Caco-2 (cell line): ENCODE measurements at regions of chr12 and their contacts with region 1.

Region 1: DNA sequence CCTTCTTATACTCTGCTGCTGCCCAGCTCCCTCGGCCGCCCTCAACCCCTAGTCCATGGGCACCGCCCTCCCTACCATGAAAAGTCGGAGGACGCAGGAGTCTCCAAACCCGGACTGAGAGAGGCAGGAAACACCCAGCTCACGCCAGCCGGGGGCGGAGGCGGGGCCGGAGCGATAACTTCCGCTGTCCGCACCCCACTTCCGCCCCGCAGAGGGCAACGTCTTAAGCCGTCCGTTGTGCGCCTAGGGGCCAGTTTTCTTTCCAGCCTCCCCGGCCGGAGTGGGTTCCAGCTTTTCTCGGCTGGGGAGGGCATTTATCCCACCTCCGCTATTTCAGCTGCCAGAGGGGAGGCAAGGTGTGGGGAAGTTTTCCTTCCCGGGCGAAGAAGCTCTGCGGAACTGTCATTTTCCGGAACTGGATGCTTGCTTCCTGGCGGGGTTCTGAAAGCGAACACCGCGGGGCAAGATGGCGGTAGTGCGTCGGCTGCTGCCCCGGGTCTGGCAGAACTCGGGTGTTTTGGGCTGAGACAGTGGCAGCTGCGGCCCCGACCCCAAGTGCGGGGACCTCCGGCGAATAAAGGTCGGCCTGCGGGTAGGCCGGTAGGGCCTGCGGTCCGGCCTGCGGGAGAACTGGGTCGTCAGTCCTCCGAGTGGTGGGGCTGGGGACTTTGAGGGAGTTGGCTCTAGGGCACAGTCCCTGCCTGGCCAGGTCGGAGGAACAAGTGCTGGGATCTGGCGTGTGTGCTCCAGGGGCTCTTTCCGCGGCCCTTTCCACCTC is at the starts of genes KCTD10 and UBE3B:
- DNase-seq: peak; percentile 89 to 90
- H3K4me3 ChIP-seq: peak within 1 kb of the TSS; percentile 95
- H3K4me3 Mint-ChIP-seq: peak within 1 kb of the TSS; percentile 99
- H3K27ac Mint-ChIP-seq: peak within 1 kb of the TSS; percentile 93
- H3K4me1 ChIP-seq: peaks cover 15% of the 10 kb centered on the region
- H3K4me1 Mint-ChIP-seq: no peaks in the 10 kb centered on the region
- H3K27me3 ChIP-seq: no peaks in the 10 kb centered on the region
- H3K27me3 Mint-ChIP-seq: no peaks in the 10 kb centered on the region
- CTCF ChIP-seq: no peak
- total RNA-seq, gene KCTD10: 40.2 and 41.5 TPM in 2 replicates
- total RNA-seq, gene UBE3B: 38.4 and 40.2 TPM in 2 replicates

Region 2: DNA sequence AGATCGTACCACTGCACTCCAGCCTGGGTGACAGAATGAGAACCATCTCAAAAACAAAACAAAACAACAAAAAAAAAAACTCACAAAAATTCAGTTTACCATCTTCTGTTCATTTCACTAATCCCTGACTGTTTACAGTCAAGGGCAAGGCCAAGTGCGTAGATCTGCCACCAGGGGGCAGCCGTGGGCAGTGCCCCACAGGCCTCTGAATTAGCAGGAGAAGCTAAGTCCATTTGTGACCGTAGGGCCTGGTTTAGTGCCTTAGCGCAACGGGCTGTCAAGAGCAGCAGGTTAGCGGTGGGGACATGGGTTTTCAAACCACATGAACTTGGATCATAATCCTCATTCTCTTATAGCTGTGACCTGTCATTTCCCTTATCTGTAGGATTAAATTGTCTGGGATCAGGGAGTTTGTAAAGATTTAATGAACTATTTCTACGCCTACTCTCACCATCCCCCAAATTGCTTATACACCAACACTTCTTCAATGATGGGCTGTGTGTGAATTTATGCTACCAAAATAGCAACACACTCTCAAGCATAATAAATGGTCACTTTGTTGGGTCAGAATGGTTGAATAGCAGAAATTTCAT is 49.2 kb before region 1 on chr12:
- CTCF ChIA-PET with region 1: interaction called, 11 read pairs
- POLR2A ChIA-PET with region 1: interaction called, 4 read pairs
- intact Hi-C with region 1: loop called (anchors 5 kb)
- DNase-seq: peak; percentile 68 to 78
- H3K4me3 ChIP-seq: no peak overlapping the region
- H3K4me3 Mint-ChIP-seq: no peak overlapping the region
- H3K27ac Mint-ChIP-seq: no peak overlapping the region
- H3K4me1 ChIP-seq: no peaks in the 10 kb centered on the region
- H3K4me1 Mint-ChIP-seq: no peaks in the 10 kb centered on the region
- H3K27me3 ChIP-seq: no peaks in the 10 kb centered on the region
- H3K27me3 Mint-ChIP-seq: no peaks in the 10 kb centered on the region
- CTCF ChIP-seq: peak; percentile 92 to 93

Region 3: GRCh38 chr12:109445191-109445609 is 32.2 kb before region 1 on chr12:
- CTCF ChIA-PET with region 1: no interaction called
- POLR2A ChIA-PET with region 1: no interaction called
- intact Hi-C with region 1: no loop called
- DNase-seq: no peak
- H3K4me3 ChIP-seq: no peak overlapping the region
- H3K4me3 Mint-ChIP-seq: no peak overlapping the region
- H3K27ac Mint-ChIP-seq: no peak overlapping the region
- H3K4me1 ChIP-seq: no peaks in the 10 kb centered on the region
- H3K4me1 Mint-ChIP-seq: peaks cover 5% of the 10 kb centered on the region
- H3K27me3 ChIP-seq: no peaks in the 10 kb centered on the region
- H3K27me3 Mint-ChIP-seq: no peaks in the 10 kb centered on the region
- CTCF ChIP-seq: no peak

Region 4: DNA sequence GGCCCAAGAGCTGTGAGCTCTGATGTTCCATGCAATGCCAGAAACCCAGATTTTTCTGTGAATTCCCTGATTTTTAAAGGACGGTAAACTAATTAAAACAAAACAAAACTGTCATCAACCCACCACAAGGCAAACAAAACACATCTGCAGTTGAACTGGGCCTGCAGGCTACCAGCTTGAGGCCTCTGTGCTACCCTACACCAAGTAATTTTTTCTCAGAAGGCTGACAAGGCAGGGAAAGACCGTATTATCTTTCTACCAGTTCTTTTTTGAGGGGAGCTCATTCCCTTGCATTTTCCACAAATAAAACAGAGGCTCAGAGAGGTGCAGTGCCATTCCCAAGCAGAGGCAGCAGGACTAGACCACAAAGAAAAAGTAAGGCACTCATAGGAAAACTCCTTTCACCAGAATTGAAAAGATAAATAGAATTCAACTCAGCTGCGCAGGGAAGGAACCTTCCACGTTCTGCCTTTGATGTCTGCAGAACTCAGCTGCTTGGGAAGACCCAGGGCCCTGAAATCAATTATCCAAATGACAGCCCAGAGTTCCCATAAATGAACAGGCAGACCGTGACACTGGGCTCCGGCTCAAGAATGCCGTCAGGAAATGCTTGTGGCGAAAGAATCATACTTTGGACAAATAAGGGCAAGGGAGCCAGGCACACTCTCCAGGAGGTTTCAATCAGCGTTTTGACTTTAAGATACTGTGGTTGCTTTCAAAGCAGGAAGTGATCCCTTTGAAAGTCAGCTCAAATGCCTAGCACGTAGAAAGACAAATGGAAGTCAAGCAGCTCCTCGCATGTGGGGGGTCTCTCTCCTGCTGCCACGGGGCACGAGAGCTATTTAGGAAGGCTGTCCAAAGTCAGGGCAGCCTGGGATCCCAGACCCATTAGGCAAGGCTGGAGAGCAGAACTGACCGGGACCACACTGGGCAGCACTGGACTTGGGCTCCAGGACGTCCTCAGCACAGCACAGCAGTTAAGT is 14.4 kb before region 1 on chr12:
- CTCF ChIA-PET with region 1: interaction called, 8 read pairs
- POLR2A ChIA-PET with region 1: interaction called, 23 read pairs
- intact Hi-C with region 1: loop called (anchors 1 kb)
- DNase-seq: peak in 1 of 2 experiments; percentile 39
- H3K4me3 ChIP-seq: no peak overlapping the region
- H3K4me3 Mint-ChIP-seq: peak overlapping the region; percentile 65
- H3K27ac Mint-ChIP-seq: peak overlapping the region; percentile 95
- H3K4me1 ChIP-seq: peaks cover 43% of the 10 kb centered on the region
- H3K4me1 Mint-ChIP-seq: peaks cover 47% of the 10 kb centered on the region
- H3K27me3 ChIP-seq: no peaks in the 10 kb centered on the region
- H3K27me3 Mint-ChIP-seq: no peaks in the 10 kb centered on the region
- CTCF ChIP-seq: no peak

Region 5: DNA sequence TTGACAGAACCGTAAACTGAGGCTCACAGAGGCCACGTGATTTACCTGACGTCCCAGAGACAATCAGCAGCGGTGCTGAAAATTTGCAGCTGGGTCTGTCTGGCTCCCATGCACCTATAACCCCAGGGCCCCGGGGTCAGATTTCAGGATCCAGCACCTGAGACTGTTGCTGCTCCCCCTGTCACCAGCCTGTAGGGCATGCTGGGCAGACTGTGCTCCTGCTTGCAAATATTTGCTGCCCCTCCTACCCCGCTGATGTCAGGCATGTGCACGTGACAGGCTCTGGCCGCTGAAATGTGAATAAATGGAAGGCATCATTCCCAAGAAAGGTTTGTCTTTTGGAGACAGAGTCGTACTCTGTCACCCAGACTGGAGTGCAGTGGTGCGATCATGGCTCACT is 89.9 kb after region 1 on chr12:
- CTCF ChIA-PET with region 1: no interaction called
- POLR2A ChIA-PET with region 1: no interaction called
- intact Hi-C with region 1: no loop called
- DNase-seq: no peak
- H3K4me3 ChIP-seq: no peak overlapping the region
- H3K4me3 Mint-ChIP-seq: no peak overlapping the region
- H3K27ac Mint-ChIP-seq: no peak overlapping the region
- H3K4me1 ChIP-seq: no peaks in the 10 kb centered on the region
- H3K4me1 Mint-ChIP-seq: no peaks in the 10 kb centered on the region
- H3K27me3 ChIP-seq: no peaks in the 10 kb centered on the region
- H3K27me3 Mint-ChIP-seq: no peaks in the 10 kb centered on the region
- CTCF ChIP-seq: no peak

Region 6: GRCh38 chr12:109581856-109582255 is 104.5 kb after region 1 on chr12:
- CTCF ChIA-PET with region 1: no interaction called
- POLR2A ChIA-PET with region 1: no interaction called
- intact Hi-C with region 1: no loop called
- DNase-seq: no peak
- H3K4me3 ChIP-seq: no peak overlapping the region
- H3K4me3 Mint-ChIP-seq: no peak overlapping the region
- H3K27ac Mint-ChIP-seq: no peak overlapping the region
- H3K4me1 ChIP-seq: no peaks in the 10 kb centered on the region
- H3K4me1 Mint-ChIP-seq: no peaks in the 10 kb centered on the region
- H3K27me3 ChIP-seq: no peaks in the 10 kb centered on the region
- H3K27me3 Mint-ChIP-seq: no peaks in the 10 kb centered on the region
- CTCF ChIP-seq: no peak

Region 7: DNA sequence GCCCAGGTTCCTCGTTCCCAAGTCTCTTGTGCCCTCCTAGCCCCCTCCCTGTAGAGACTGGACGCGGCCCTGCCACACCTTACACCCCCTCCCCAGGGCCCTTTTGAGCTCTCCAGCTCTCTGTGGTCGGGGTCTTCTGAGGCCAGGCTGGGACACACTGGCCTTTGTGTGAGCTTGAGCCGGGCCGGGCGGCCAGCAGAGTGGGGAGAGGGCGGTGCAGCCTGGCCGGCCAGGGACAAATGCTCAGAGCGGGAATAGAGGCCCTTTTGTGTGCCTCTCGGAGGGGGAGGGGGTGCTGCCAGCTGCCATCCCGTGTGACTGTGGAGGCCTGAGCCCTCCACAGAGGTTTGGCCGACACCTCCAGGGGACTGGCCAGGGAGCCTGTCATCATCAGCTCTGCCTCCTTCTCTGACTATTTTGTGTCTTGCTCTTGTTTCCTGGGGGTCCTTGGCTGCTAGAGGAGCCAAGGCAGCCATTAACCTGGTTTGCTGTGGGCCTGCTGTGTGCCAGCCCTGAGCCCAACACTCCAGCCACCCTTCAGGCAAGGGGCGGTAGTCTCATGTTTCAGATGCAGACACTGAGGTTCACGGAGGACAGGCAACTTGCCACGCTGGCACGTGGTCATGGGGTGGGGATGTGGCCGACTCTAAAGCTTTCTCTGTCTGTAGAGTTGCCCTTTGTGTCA is 249.8 kb after region 1 on chr12:
- CTCF ChIA-PET with region 1: no interaction called
- POLR2A ChIA-PET with region 1: no interaction called
- intact Hi-C with region 1: no loop called
- DNase-seq: peak in 1 of 2 experiments; percentile 28
- H3K4me3 ChIP-seq: no peak overlapping the region
- H3K4me3 Mint-ChIP-seq: no peak overlapping the region
- H3K27ac Mint-ChIP-seq: no peak overlapping the region
- H3K4me1 ChIP-seq: peaks cover 4% of the 10 kb centered on the region
- H3K4me1 Mint-ChIP-seq: peaks cover 9% of the 10 kb centered on the region
- H3K27me3 ChIP-seq: no peaks in the 10 kb centered on the region
- H3K27me3 Mint-ChIP-seq: no peaks in the 10 kb centered on the region
- CTCF ChIP-seq: no peak